Activated CD4-positive, alpha-beta memory T cell treated with anti-CD3 and anti-CD28 coated beads for 36 hours (primary cell): ENCODE measurements at regions of chr3 and their contacts with region 1.

Region 1: GRCh38 chr3:195894780-195895607 is 13.4 kb downstream of the TNK2 start:
- DNase-seq: peak; percentile 84
- H3K4me3 Mint-ChIP-seq: peak overlapping the region; percentile 84
- H3K27ac Mint-ChIP-seq: peak overlapping the region; percentile 89
- H3K4me1 Mint-ChIP-seq: peaks cover 39% of the 10 kb centered on the region
- H3K27me3 Mint-ChIP-seq: no peaks in the 10 kb centered on the region

Region 2: DNA sequence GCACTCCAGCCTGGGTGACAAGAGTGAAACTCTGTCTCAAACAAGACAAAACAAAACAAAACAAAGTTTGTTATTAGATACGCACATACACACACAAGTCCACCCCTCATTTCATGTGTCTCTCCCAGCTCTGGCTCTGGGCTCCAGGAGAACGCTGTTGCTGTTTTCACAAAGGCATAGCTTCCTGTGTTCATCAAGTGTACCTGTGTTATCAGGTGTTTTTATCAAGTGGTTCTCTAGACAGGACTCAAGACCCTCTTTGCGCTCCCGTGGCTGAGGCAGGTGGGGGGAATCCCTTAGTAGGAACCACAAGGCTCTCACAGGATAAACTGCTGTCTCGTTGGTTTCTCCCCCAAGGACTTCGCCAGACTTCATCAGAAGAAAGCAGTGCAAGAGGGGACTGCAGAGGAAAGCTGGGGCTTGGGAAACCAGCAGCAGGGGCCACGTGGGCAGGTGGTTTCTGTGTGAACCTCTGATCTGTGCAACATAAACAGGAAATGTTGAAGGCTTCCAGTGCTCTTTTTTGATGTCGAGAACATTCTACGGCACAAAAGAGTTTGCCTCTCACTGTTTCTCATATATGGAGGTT is 345.0 kb before region 1 on chr3:
- CTCF ChIA-PET with region 1: no interaction called
- POLR2A ChIA-PET with region 1: no interaction called
- intact Hi-C with region 1: loop called (anchors 5 kb)
- DNase-seq: peak; percentile 87
- H3K4me3 Mint-ChIP-seq: peak overlapping the region; percentile 68
- H3K27ac Mint-ChIP-seq: peak overlapping the region; percentile 87
- H3K4me1 Mint-ChIP-seq: peaks cover 81% of the 10 kb centered on the region
- H3K27me3 Mint-ChIP-seq: no peaks in the 10 kb centered on the region

Region 3: GRCh38 chr3:195909644-195910508 is 14.9 kb after region 1 on chr3:
- CTCF ChIA-PET with region 1: interaction called, 109 read pairs
- POLR2A ChIA-PET with region 1: interaction called, 51 read pairs
- intact Hi-C with region 1: loop called (anchors 1 kb)
- DNase-seq: peak; percentile 91
- H3K4me3 Mint-ChIP-seq: peak overlapping the region; percentile 66
- H3K27ac Mint-ChIP-seq: peak overlapping the region; percentile 54
- H3K4me1 Mint-ChIP-seq: peaks cover 28% of the 10 kb centered on the region
- H3K27me3 Mint-ChIP-seq: no peaks in the 10 kb centered on the region